Endothelial cell of umbilical vein (primary cell): ENCODE measurements at regions of chr5 and their contacts with region 1.

Region 1: GRCh38 chr5:55232985-55233928 is at the start of gene CCNO:
- DNase-seq: peak; percentile 83
- H3K4me3 ChIP-seq: peak within 1 kb of the TSS; percentile 44 to 70 (median 53)
- H3K27ac ChIP-seq: no peak within 1 kb of the TSS
- H3K4me1 ChIP-seq: peaks cover 26% of the 10 kb centered on the region
- H3K27me3 ChIP-seq: peaks cover 45% of the 10 kb centered on the region in 2 experiments
- CTCF ChIP-seq: no peak
- POLR2A ChIP-seq: no peak
- total RNA-seq, gene CCNO: 0.58 and 0.88 TPM in 2 replicates

Region 2: GRCh38 chr5:55220391-55221185 is 12.7 kb before region 1 on chr5:
- CTCF ChIA-PET with region 1: interaction called, 11 read pairs
- POLR2A ChIA-PET with region 1: no interaction called
- dilution Hi-C with region 1: no loop called
- intact Hi-C with region 1: no loop called
- DNase-seq: no peak
- H3K4me3 ChIP-seq: peak overlapping the region in 2 of 3 experiments; percentile 9 to 14
- H3K27ac ChIP-seq: no peak overlapping the region
- H3K4me1 ChIP-seq: peaks cover 9% of the 10 kb centered on the region
- H3K27me3 ChIP-seq: peaks cover 49 to 74% of the 10 kb centered on the region in 2 experiments
- CTCF ChIP-seq: peak in 1 of 2 donors; percentile 17
- POLR2A ChIP-seq: no peak

Region 3: DNA sequence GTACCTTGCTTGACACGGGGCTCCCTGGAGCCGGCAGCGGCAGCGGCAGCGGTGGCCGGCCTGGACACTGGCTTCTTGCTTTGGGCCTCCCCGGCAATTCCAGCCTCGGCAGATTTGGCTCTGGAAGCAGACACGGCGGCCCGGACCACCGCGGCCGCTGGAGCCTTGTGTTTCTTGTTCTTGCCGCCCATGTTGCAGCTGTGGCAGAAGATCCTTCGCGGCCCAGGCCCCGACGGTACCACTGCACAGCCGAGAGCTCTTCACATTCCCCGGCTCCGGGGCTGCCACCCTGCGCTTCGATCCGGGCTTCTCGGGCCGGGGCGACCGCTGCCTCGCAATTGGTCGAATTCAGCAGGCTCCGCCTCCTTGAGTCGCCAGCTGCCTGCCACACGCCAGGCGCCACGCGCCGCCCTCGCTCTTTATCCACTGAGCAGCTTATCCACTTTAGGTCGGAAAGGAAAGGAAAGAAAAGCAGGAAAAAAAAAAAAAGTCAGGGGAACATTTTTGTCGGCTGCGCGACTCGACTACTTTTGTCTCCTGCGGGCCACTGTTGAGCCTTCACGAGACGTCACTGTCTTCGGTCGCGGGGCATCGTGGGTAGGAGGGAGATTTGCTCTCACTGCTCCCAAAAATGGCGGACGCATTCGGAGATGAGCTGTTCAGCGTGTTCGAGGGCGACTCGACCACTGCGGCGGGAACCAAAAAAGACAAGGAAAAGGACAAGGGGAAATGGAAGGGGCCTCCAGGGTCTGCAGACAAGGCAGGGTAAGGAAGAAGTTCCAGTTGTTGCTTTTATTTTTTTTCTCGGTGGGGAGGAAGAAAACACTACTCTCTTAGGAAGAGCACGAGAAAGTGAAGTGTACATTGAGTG is 74.4 kb after region 1 on chr5 and contains the starts of genes DHX29 and MTREX:
- CTCF ChIA-PET with region 1: interaction called, 3 read pairs
- POLR2A ChIA-PET with region 1: interaction called, 3 read pairs
- dilution Hi-C with region 1: no loop called
- intact Hi-C with region 1: loop called (anchors 5 kb)
- DNase-seq: peak; percentile 97
- H3K4me3 ChIP-seq: peak within 1 kb of the TSS; percentile 77 to 99 (median 81)
- H3K27ac ChIP-seq: peak within 1 kb of the TSS; percentile 82
- H3K4me1 ChIP-seq: peaks cover 45% of the 10 kb centered on the region
- H3K27me3 ChIP-seq: no peaks in the 10 kb centered on the region
- CTCF ChIP-seq: no peak
- POLR2A ChIP-seq: peak; percentile 48
- total RNA-seq, gene DHX29: 28.0 and 32.8 TPM in 2 replicates
- total RNA-seq, gene MTREX: 76.3 and 77.2 TPM in 2 replicates